ENCODE measurements at regions of chr6 and their contacts with region 1.

Region 1: DNA sequence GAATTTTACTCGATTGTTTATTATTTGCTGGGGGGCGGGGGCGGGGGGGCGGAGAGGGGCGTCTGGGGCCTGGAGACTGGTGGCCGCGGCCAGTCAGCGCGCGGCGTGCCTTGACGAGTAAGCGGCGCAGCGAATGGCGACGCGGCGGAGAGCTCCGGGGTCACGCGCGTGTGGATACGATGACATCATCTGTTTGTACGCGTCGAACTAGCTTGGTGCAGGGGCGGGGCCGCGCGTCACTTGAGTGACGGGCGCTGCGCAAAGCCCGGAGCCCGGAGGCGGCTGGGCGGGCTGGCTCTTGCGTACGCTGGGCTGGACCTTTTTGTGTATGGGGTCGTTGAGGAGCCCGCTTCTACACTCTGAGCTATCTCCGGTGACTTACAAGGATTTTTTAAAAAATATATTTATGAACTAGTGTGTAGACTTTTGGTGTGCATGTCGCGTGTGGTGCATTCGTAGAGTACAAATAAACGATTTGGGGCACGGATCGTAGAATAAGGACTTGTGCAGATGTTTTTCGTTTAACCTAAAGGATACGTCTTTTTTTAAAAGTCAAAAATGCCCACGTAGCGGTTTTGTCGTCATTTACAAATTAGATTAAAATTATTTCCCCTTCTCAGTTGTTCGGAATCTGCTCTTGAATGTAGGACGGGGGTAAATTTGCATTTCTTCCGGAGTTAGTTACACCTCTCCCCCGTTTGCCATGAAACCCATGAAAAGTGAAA is 2.2 kb upstream of the FOXO3 start:
- DNase-seq: peak; percentile 99 to 100 (median 99)
- H3K4me3 ChIP-seq: peak overlapping the region; percentile 96 to 100 (median 99)
- H3K27ac ChIP-seq: peak overlapping the region; percentile 99
- H3K4me1 ChIP-seq: peaks cover 0 to 11% (median 11%) of the 10 kb centered on the region in 3 donors
- H3K27me3 ChIP-seq: no peaks in the 10 kb centered on the region
- CTCF ChIP-seq: no peak

Region 2: DNA sequence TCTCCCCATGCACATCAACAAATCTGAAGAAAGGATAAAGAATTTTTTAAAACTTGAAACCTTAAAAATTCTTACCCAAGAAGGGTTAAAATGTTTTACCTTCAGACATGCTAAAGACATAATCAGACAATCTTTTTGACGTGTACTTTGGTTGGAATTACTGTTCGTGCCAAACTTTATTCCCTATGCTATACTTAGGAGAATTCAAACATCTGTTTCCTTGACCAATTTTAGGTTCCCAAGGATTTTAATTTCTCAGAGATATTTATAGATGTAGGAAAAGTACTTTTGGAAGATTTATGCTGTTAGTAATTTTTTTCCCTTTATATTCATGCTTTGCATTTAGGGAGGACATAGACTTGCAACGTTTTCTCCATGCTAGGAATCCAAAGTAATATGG is 155.3 kb before region 1 on chr6:
- intact Hi-C with region 1: no loop called
- DNase-seq: peak in 1 of 5 donors; percentile 10
- H3K4me3 ChIP-seq: no peak overlapping the region
- H3K27ac ChIP-seq: no peak overlapping the region
- H3K4me1 ChIP-seq: peaks cover 0 to 1% (median 0%) of the 10 kb centered on the region in 3 donors
- H3K27me3 ChIP-seq: no peaks in the 10 kb centered on the region
- CTCF ChIP-seq: no peak

Region 3: GRCh38 chr6:108782179-108783041 is 223.9 kb after region 1 on chr6:
- intact Hi-C with region 1: loop called (anchors 10 kb)
- DNase-seq: peak; percentile 83 to 92 (median 89)
- H3K4me3 ChIP-seq: peak overlapping the region; percentile 85 to 95 (median 94)
- H3K27ac ChIP-seq: peak overlapping the region; percentile 6 to 41
- H3K4me1 ChIP-seq: peaks cover 0 to 10% (median 2%) of the 10 kb centered on the region in 3 donors
- H3K27me3 ChIP-seq: no peaks in the 10 kb centered on the region
- CTCF ChIP-seq: peak; percentile 85

Region 4: DNA sequence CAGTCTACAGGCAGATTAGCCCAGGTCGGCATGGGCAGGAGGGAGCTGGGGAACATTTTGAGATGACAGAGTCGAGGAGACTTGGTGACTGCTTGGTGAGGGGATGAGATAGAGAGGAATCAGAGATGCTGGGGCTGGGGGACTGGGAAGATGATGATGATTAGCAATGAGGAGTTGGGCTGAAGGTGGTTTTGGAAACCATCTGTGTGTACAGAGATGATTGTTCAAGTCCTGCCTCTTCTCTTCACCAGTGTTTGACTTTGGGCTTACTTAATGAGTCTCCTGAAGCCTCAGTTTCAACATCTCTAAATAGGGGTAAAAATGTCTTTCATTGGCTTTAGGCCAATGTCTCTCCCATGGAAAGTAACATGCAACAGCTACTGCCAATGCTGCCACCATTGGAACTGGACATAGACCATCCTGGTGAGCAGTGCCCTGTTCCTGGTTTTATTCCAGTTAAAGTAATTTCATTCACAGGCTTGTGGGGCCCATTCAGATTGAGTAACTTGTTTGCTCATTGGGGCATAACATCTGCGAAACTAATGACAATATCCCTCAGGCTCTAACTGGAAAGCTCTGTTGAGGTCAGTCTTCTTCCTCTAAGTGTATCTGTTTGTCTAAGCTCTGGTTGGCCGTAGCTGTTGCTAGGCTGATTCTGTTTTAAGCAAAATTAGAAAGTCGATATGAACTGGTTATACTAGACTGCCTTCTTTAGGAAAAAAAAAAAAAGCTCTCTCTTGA is 388.8 kb after region 1 on chr6:
- intact Hi-C with region 1: no loop called
- DNase-seq: peak in 3 of 5 donors; percentile 43 to 84 (median 76)
- H3K4me3 ChIP-seq: no peak overlapping the region
- H3K27ac ChIP-seq: peak overlapping the region; percentile 46 to 82
- H3K4me1 ChIP-seq: peaks cover 15 to 35% (median 35%) of the 10 kb centered on the region in 3 donors
- H3K27me3 ChIP-seq: no peaks in the 10 kb centered on the region
- CTCF ChIP-seq: no peak

Measured in kidney (tissue), 22 donors.